GM12878 (cell line): ENCODE measurements at regions of chr17 and their contacts with region 1.

Region 1: GRCh38 chr17:30031214-30031869 is 85.3 kb upstream of the NSRP1 start:
- DNase-seq: peak; percentile 33
- ATAC-seq: peak; percentile 98
- H3K4me3 ChIP-seq: no peak overlapping the region
- H3K27ac ChIP-seq: no peak overlapping the region
- H3K4me1 ChIP-seq: no peaks in the 10 kb centered on the region
- H3K27me3 ChIP-seq: no peaks in the 10 kb centered on the region; a peak in 1 of 4 replicates
- CTCF ChIP-seq: no peak
- EP300 ChIP-seq: no peak
- POLR2A ChIP-seq: no peak
- RAD21 ChIP-seq: no peak

Region 2: GRCh38 chr17:30041551-30041950 is 10.2 kb after region 1 on chr17:
- CTCF ChIA-PET with region 1: interaction called, 5 read pairs
- POLR2A ChIA-PET with region 1: no interaction called
- RAD21 ChIA-PET with region 1: no interaction called
- SMC1A ChIA-PET with region 1: interaction called, 12 read pairs
- in situ Hi-C with region 1: no loop called
- intact Hi-C with region 1: no loop called
- DNase-seq: no peak
- ATAC-seq: no peak
- H3K4me3 ChIP-seq: no peak overlapping the region
- H3K27ac ChIP-seq: no peak overlapping the region
- H3K4me1 ChIP-seq: no peaks in the 10 kb centered on the region
- H3K27me3 ChIP-seq: no peaks in the 10 kb centered on the region
- CTCF ChIP-seq: no peak
- EP300 ChIP-seq: no peak
- POLR2A ChIP-seq: no peak
- RAD21 ChIP-seq: no peak